ENCODE measurements at regions of chr11 and their contacts with region 1.

Region 1: DNA sequence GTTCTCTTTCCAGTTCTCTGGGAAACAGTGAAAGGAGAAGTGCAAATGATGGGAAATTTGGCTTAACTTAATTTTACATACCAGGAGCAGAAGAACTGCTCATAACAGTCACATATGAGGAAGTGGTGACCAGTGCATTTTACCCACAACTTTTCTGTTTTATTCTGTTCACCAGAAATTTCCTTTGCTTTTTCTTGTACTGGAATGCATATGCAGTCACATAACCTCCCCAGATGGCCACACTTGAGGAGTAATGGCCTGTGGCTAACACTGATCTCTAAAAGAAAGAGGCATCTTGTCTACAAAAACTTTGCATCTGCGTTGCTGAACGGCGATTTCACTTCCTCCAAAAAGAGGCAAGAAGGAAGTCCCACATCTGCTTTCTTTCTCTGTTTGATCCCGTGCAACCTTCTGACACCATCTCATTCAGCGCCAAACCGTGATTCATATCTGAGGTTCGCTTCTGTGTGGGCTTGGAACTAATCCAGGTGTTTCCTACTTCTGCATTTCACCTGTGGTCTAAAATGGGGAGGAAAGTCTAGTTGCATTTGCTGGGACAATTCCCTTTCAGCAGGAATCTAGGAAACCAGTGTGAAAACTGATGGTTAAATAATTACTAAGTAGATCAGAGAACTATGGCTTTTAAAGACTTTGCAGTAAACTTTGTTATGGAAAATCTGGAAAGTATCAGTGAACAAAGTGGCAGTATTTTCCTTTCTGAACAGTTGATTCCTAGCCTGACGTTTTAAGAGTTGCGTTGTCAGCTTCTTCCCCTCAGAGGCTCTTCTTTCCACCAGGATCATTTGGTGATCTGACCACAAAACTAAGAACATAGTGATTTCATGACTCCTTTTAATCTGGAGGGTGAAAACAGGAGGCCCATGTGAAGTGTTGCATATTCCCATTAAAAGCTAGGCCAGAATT is 4.2 kb upstream of the MPEG1 start:
- DNase-seq: peak; percentile 99
- ATAC-seq: peak; percentile 88
- H3K4me3 ChIP-seq: no peak overlapping the region
- H3K27ac ChIP-seq: peak overlapping the region; percentile 91
- H3K4me1 ChIP-seq: peaks cover 76% of the 10 kb centered on the region
- H3K27me3 ChIP-seq: no peaks in the 10 kb centered on the region
- CTCF ChIP-seq: no peak
- EP300 ChIP-seq: peak; percentile 99 to 100
- POLR2A ChIP-seq: no peak
- RAD21 ChIP-seq: peak; percentile 40

Region 2: DNA sequence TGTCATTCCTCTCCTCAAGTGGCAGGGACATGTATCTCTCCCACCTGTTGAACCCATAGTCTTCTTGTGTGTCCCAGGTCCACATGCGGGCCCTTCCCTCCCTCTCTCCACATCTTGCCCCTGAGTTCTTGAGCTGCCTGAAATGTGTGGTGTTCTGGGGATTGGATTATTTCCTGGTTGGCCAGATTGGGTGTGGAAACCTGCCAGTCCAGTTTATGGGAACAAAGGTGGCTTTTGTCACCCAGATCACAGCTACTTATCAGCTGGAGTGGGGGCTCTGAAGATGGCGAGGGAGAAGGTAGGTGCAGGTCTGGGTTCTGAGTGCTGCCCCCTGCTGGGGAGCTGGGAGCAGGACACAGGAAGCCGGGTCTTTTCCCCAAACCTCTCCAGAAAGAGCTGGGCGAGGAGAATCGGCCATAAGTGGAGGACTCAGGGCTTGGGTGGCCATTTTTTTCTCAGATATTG is 30.7 kb before region 1 on chr11:
- CTCF ChIA-PET with region 1: interaction called, 1,180 read pairs
- POLR2A ChIA-PET with region 1: no interaction called
- RAD21 ChIA-PET with region 1: interaction called, 7 read pairs
- SMC1A ChIA-PET with region 1: interaction called, 7 read pairs
- in situ Hi-C with region 1: no loop called
- intact Hi-C with region 1: no loop called
- DNase-seq: no peak
- ATAC-seq: peak; percentile 88
- H3K4me3 ChIP-seq: no peak overlapping the region
- H3K27ac ChIP-seq: no peak overlapping the region
- H3K4me1 ChIP-seq: peaks cover 10% of the 10 kb centered on the region
- H3K27me3 ChIP-seq: no peaks in the 10 kb centered on the region
- CTCF ChIP-seq: peak; percentile 67 to 92 (median 89)
- EP300 ChIP-seq: no peak
- POLR2A ChIP-seq: no peak
- RAD21 ChIP-seq: peak; percentile 46

Region 3: DNA sequence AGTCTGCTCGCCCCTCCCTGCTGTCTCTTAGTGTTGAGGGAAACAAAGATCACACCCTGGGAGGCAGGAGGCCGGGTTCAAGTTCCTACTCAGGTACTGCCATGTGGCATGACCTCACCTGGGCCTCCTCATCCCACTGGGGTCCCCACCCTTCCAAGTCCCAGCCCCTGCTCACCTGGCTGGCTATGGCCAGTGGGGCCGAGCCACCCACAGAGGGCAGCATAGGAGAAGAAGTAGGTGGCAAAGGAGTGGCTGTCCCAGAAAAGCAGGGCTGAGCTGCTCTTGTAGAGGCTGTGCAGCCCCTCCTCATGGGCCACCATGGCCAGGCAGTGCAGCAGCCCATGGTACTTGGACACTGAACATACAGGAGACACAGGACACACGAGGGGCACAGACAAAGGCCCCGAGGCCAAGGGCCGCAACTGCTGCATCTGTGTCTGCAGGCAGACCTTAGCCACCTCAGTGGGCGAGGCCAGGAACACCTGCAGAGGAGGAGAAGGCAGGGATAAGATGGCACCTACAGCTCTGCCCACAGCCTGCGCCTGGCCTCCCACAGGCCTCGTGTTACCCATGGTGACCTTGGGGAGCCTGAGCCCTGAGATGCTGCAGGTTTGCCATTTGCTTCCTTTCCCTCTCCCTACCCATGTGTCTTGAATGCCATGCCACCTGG is 46.5 kb after region 1 on chr11:
- CTCF ChIA-PET with region 1: interaction called, 43 read pairs
- POLR2A ChIA-PET with region 1: interaction called, 5 read pairs
- RAD21 ChIA-PET with region 1: interaction called, 3 read pairs
- SMC1A ChIA-PET with region 1: interaction called, 18 read pairs
- in situ Hi-C with region 1: no loop called
- intact Hi-C with region 1: no loop called
- DNase-seq: no peak
- ATAC-seq: peak; percentile 53
- H3K4me3 ChIP-seq: no peak overlapping the region
- H3K27ac ChIP-seq: no peak overlapping the region
- H3K4me1 ChIP-seq: peaks cover 30% of the 10 kb centered on the region
- H3K27me3 ChIP-seq: no peaks in the 10 kb centered on the region
- CTCF ChIP-seq: peak; percentile 56 to 71 (median 58)
- EP300 ChIP-seq: no peak
- POLR2A ChIP-seq: no peak
- RAD21 ChIP-seq: peak; percentile 82

Region 4: DNA sequence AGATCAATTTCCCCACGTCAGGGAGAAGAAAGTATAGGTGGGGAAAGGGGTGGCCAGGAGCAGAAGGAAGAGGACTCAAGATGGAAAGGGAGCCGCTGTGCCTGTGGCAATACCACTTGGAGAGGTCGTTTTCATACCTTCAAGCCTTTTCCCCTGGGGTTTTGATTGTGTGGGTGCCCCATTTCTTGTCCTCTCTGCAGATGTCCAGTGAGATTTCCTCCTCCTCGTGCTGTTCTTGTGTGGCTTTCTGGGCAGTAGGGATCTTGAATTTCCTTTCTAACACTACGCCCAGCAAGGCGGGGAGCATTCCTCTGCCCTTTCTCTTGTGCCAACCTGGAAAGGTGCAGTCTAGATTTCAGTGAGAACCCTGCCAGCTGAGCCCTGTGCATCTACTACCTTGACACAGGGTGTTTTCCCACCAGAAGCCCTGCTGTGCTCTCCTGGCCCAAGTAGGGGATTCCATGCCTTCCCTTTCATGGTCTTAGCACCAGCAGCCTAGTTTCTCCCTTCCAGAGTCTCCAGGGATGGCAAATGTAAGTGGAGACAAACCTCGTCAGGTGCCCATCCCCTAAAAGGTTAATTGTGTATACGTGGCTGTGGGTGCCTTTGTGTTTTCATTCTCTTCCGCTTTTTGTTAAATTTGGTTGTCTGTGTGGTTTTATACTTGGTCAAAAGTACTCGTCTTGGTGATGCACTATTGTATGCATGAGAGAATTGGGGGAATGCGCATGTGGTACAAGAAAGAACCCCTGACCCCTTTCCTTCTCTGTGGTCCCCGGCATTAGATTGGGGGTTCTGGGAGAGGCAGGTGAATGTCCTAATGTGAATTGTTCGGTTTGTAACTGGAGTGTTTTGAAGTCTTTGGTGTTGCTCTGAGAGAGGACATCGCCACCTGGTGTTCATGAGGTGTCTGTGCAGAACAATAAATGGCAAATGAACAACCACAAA is 67.2 kb after region 1 on chr11:
- CTCF ChIA-PET with region 1: interaction called, 5 read pairs
- POLR2A ChIA-PET with region 1: no interaction called
- RAD21 ChIA-PET with region 1: interaction called, 7 read pairs
- SMC1A ChIA-PET with region 1: interaction called, 4 read pairs
- in situ Hi-C with region 1: no loop called
- intact Hi-C with region 1: loop called (anchors 1 kb)
- DNase-seq: peak; percentile 71
- ATAC-seq: peak; percentile 86
- H3K4me3 ChIP-seq: peak overlapping the region; percentile 37
- H3K27ac ChIP-seq: peak overlapping the region; percentile 63
- H3K4me1 ChIP-seq: peaks cover 18% of the 10 kb centered on the region
- H3K27me3 ChIP-seq: no peaks in the 10 kb centered on the region
- CTCF ChIP-seq: peak; percentile 81 to 83 (median 82)
- EP300 ChIP-seq: 0 out of 4 replicates have a peak, but pooled peaks of 1 of the 2 experiments have one; percentile 26
- POLR2A ChIP-seq: no peak
- RAD21 ChIP-seq: peak; percentile 84

Region 5: DNA sequence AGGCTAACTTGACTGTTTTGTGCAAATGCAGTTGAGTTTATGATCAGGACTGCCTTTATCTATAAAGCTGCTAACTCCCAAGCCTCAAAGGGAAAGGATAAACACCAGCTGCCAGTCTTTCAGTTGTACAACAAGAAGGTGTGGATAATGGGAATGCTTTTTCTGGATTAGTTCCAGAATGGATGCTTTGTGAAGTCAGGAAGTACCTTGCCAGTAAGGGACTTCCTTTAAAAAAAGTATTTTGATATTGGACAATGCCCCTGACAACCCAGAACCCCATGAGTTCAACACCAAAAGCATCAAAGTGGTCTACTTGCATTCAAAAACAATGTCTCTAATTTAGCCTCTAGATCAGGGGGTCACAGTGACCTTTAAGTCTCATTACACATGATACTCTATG is 177.3 kb after region 1 on chr11:
- CTCF ChIA-PET with region 1: no interaction called
- POLR2A ChIA-PET with region 1: no interaction called
- RAD21 ChIA-PET with region 1: no interaction called
- SMC1A ChIA-PET with region 1: no interaction called
- in situ Hi-C with region 1: no loop called
- intact Hi-C with region 1: no loop called
- DNase-seq: no peak
- ATAC-seq: no peak
- H3K4me3 ChIP-seq: no peak overlapping the region
- H3K27ac ChIP-seq: no peak overlapping the region
- H3K4me1 ChIP-seq: no peaks in the 10 kb centered on the region
- H3K27me3 ChIP-seq: no peaks in the 10 kb centered on the region
- CTCF ChIP-seq: no peak
- EP300 ChIP-seq: no peak
- POLR2A ChIP-seq: no peak
- RAD21 ChIP-seq: no peak

Region 6: DNA sequence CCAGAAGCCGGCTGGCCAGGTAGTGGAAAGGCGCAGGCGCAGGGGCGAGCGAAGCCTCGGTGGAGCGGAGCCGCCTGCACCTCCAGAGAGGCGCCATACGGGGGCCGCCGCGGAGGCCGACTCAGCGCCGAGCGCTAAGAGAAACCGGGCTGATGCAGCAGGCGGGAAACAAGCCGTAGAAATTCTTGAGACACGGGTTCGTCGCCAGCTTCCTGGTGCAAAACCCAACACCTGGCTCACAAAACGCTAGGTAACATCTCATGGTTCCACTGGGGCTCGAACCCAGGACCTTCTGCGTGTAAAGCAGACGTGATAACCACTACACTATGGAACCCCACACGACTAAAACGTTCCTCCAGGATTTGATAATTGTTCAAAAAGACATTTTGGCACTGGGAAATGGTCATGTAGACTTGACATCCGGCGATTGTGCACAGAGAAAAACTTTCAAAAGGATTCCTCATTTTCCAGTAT is 333.5 kb after region 1 on chr11:
- CTCF ChIA-PET with region 1: no interaction called
- POLR2A ChIA-PET with region 1: no interaction called
- RAD21 ChIA-PET with region 1: no interaction called
- SMC1A ChIA-PET with region 1: no interaction called
- in situ Hi-C with region 1: loop called (anchors 10 kb)
- intact Hi-C with region 1: no loop called
- DNase-seq: peak; percentile 96
- ATAC-seq: peak; percentile 96
- H3K4me3 ChIP-seq: peak overlapping the region; percentile 74
- H3K27ac ChIP-seq: peak overlapping the region; percentile 83
- H3K4me1 ChIP-seq: no peaks in the 10 kb centered on the region
- H3K27me3 ChIP-seq: no peaks in the 10 kb centered on the region
- CTCF ChIP-seq: peak; percentile 39 to 59 (median 57)
- EP300 ChIP-seq: peak in 1 of 2 experiments; percentile 57; a peak in 1 of 4 replicates
- POLR2A ChIP-seq: peak; percentile 40; the same call in 1 of the 2 replicates
- RAD21 ChIP-seq: no peak

Measured in GM12878 (cell line).